ENCODE measurements at regions of chr15 and their contacts with region 1.

Region 1: GRCh38 chr15:57751177-57751800 is 44.8 kb downstream of the POLR2M start:
- DNase-seq: no peak
- H3K4me3 Mint-ChIP-seq: no peak overlapping the region
- H3K27ac Mint-ChIP-seq: no peak overlapping the region
- H3K4me1 Mint-ChIP-seq: peaks cover 8% of the 10 kb centered on the region
- H3K27me3 Mint-ChIP-seq: no peaks in the 10 kb centered on the region

Region 2: DNA sequence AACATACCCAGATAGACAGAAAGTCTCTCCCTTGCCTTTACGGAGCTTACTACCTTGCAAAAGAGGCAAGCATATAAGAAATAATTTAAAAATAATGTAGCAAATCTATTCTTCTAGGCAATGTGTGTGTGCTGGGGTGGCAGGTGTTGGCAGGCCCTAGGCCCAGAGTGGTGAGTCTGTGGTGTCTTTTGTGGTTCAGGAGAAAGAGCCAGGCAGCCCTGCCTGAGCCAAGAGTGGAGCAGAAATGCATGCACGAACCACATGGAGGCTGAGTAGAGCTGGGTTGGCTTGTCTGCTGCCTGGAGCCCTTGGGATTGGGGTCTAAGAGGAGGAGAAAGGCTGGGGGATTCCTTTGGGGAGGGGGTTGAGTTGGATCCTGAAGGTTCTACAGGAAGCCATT is 229.8 kb before region 1 on chr15:
- CTCF ChIA-PET with region 1: no interaction called
- DNase-seq: no peak
- H3K4me3 Mint-ChIP-seq: no peak overlapping the region
- H3K27ac Mint-ChIP-seq: no peak overlapping the region
- H3K4me1 Mint-ChIP-seq: no peaks in the 10 kb centered on the region
- H3K27me3 Mint-ChIP-seq: peaks cover 23% of the 10 kb centered on the region

Region 3: DNA sequence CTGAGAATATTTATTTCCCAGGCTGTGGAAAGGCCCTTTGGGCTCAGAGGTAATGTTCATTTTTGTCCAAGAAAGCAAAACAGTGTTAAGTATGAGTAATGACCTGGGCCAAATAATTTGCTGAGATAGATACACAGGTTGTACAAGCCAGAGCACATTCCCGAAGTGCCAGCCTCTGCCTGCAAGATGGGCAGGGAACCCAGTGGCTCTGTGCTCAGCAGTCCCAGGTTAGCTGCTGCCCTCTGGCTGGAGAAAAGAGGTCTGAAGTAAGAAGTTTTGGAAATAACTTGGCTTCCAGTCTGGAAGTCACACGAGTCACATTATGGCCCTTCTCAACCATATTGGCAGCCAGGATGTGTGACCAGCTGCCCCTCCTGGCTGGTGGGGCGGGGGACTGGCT is 139.4 kb before region 1 on chr15:
- CTCF ChIA-PET with region 1: no interaction called
- DNase-seq: no peak
- H3K4me3 Mint-ChIP-seq: no peak overlapping the region
- H3K27ac Mint-ChIP-seq: no peak overlapping the region
- H3K4me1 Mint-ChIP-seq: peaks cover 6% of the 10 kb centered on the region
- H3K27me3 Mint-ChIP-seq: peaks cover 4% of the 10 kb centered on the region

Region 4: DNA sequence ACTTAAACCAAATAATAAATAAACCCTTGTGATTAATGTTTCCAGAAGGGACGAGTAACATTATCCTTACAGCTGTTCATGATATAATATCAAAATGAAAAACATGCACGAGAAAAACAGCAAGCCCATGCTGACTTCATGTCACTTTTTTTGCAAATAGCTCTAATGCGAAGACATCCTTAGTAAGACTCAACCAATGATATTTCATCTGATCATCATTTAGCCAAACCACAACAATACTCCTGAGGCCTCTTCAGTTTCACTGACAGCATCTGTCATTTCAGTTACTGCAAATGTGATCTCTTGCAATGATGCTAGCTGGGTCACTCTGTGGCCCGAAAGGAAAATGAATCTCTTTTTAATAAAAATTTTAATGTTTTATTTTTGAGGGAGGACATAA is 29.2 kb after region 1 on chr15:
- CTCF ChIA-PET with region 1: interaction called, 15 read pairs
- DNase-seq: no peak
- H3K4me3 Mint-ChIP-seq: no peak overlapping the region
- H3K27ac Mint-ChIP-seq: no peak overlapping the region
- H3K4me1 Mint-ChIP-seq: peaks cover 64% of the 10 kb centered on the region
- H3K27me3 Mint-ChIP-seq: peaks cover 21% of the 10 kb centered on the region

Region 5: DNA sequence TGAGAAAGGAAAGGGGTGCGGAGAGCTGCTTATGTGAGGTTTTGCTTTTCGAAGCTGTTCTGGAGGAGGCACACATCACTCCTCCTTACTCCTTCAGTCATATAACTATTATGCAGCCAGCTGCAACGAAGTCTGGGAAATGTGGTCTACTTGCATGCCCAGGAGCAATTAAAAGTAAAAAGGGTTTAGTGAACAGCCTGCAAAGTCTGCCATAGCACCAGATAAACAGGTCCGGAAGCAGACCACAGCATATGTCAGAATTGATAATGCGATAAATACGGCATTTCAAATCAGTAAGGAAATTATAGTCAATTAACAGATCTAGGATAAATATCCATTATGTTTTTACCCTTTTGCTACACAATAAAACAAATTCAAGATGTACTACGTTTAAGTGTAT is 54.7 kb after region 1 on chr15:
- CTCF ChIA-PET with region 1: no interaction called
- DNase-seq: no peak
- H3K4me3 Mint-ChIP-seq: no peak overlapping the region
- H3K27ac Mint-ChIP-seq: no peak overlapping the region
- H3K4me1 Mint-ChIP-seq: no peaks in the 10 kb centered on the region
- H3K27me3 Mint-ChIP-seq: peaks cover 6% of the 10 kb centered on the region

Region 6: GRCh38 chr15:57835119-57835518 is 83.8 kb after region 1 on chr15:
- CTCF ChIA-PET with region 1: no interaction called
- DNase-seq: no peak
- H3K4me3 Mint-ChIP-seq: no peak overlapping the region
- H3K27ac Mint-ChIP-seq: no peak overlapping the region
- H3K4me1 Mint-ChIP-seq: no peaks in the 10 kb centered on the region
- H3K27me3 Mint-ChIP-seq: peaks cover 39% of the 10 kb centered on the region

Region 7: DNA sequence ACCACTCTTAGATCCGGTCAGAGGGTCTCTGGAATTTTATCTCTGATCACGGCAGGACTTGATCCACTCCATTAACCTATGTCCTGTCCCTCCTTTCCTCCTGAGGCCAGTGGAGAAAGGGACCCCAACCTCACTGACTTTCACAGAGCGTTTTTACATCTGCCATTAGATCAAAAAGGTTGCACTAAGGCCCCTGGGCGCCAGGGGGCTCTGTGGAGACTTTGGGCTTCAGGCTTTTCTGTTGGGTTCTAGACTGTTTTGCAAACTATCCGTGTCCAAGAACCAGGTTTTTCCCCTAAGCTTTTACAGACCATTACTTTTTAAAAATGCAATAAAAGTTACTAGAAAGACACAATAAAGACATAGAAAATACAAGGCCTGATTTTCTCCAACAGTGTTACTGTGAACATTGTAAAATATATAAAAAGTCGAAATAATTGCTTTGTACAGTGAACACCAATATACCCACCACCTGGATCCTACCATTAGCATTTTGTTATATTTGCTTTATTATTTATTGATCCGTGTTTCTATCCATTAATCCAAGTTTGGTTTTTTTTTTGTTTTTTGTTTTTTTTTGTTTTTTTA is 115.0 kb after region 1 on chr15:
- CTCF ChIA-PET with region 1: interaction called, 303 read pairs
- DNase-seq: peak; percentile 72
- H3K4me3 Mint-ChIP-seq: no peak overlapping the region
- H3K27ac Mint-ChIP-seq: no peak overlapping the region
- H3K4me1 Mint-ChIP-seq: peaks cover 10% of the 10 kb centered on the region
- H3K27me3 Mint-ChIP-seq: peaks cover 46% of the 10 kb centered on the region

Measured in activated naive CD4-positive, alpha-beta T cell treated with anti-CD3 and anti-CD28 coated beads, Interleukin-2, amount 10 ng/mL, durations not matched to agents 7 days and 5 days (primary cell).